IMR-90 (cell line): ENCODE measurements at regions of chr7 and their contacts with region 1.

Region 1: DNA sequence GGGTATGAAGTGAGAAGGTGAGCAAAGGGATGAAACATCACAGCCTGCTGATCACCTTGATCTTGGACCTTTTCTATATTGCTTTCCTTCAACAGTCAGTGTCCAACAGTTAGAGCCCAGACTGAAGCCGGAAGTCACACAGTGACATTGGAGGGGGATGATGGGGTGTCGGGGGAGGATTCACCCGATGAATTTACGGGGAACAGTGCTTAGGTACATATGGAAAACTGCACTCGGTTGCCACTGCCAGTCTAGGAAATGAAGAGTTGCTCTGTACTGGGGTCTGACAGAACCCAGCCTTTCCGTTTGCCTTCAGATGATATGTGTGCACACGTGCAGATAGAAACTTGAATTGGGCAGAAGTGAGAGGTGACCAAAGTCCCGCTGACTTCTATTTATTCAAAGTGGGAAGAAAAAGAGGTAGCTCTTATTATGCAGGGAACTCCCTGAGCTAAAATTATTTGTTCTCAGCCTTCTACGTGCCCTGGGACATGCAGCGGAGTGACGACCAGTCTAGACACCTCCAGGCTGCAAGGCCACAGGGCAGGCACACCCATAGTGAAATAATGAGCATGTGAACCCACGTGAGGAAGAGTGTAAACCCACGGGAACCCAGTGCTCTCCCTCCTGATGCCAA is 107.2 kb upstream of the INHBA start:
- DNase-seq: no peak
- ATAC-seq: no peak
- H3K4me3 ChIP-seq: no peak overlapping the region
- H3K27ac ChIP-seq: no peak overlapping the region
- H3K4me1 ChIP-seq: no peaks in the 10 kb centered on the region
- H3K27me3 ChIP-seq: no peaks in the 10 kb centered on the region
- CTCF ChIP-seq: no peak
- POLR2A ChIP-seq: no peak
- RAD21 ChIP-seq: no peak

Region 2: GRCh38 chr7:41824284-41824683 is 14.2 kb after region 1 on chr7:
- CTCF ChIA-PET with region 1: no interaction called
- POLR2A ChIA-PET with region 1: no interaction called
- dilution Hi-C with region 1: no loop called
- in situ Hi-C with region 1: no loop called
- intact Hi-C with region 1: no loop called
- DNase-seq: peak; percentile 71
- ATAC-seq: no peak; the same call in 1 of the 2 replicates
- H3K4me3 ChIP-seq: no peak overlapping the region
- H3K27ac ChIP-seq: no peak overlapping the region
- H3K4me1 ChIP-seq: peaks cover 13% of the 10 kb centered on the region
- H3K27me3 ChIP-seq: no peaks in the 10 kb centered on the region
- CTCF ChIP-seq: no peak
- POLR2A ChIP-seq: no peak
- RAD21 ChIP-seq: no peak

Region 3: DNA sequence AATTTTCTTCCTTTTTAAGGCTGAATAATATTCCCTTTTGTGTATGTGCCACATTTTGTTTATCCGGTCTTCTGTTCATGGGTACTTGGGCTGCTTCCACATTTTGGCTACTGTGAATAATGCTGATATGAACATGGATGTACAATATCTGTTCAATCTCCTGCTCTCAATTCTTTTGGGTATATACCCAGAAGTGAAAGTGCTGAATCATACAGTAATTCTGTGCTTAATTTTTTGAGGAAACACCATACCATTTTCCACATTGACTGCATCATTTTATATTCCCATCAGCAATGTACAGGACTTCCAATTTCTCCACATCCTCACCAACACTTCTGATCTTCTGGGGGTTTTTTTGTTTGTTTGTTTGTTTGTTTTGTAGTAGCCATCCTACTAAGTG is 27.9 kb after region 1 on chr7:
- CTCF ChIA-PET with region 1: no interaction called
- POLR2A ChIA-PET with region 1: interaction called, 10 read pairs
- dilution Hi-C with region 1: no loop called
- in situ Hi-C with region 1: no loop called
- intact Hi-C with region 1: no loop called
- DNase-seq: no peak
- ATAC-seq: no peak
- H3K4me3 ChIP-seq: no peak overlapping the region
- H3K27ac ChIP-seq: no peak overlapping the region
- H3K4me1 ChIP-seq: peaks cover 4% of the 10 kb centered on the region; the same call in 1 of the 2 replicates
- H3K27me3 ChIP-seq: no peaks in the 10 kb centered on the region
- CTCF ChIP-seq: no peak
- POLR2A ChIP-seq: no peak
- RAD21 ChIP-seq: no peak

Region 4: DNA sequence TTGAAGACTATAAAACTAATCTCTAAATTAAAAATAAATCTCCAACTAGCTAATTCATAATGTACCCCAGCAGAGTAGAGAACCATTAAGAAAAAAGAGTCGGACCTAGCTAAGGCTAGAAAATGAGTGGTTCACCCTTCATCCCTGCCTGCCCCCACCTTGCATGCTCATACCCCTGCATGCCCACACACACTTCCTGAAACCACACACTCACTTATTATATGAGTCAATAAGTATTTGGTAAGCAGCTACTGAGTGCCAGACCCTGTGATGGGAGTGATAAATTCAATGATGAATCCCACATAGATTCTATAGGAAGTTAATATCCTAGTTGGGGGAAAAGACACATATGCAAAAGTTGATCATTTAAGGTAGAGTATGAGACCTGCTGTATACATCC is 45.7 kb after region 1 on chr7:
- CTCF ChIA-PET with region 1: no interaction called
- POLR2A ChIA-PET with region 1: no interaction called
- dilution Hi-C with region 1: no loop called
- in situ Hi-C with region 1: no loop called
- intact Hi-C with region 1: no loop called
- DNase-seq: peak; percentile 43
- ATAC-seq: no peak
- H3K4me3 ChIP-seq: no peak overlapping the region
- H3K27ac ChIP-seq: no peak overlapping the region
- H3K4me1 ChIP-seq: peaks cover 4% of the 10 kb centered on the region; the same call in 1 of the 2 replicates
- H3K27me3 ChIP-seq: no peaks in the 10 kb centered on the region
- CTCF ChIP-seq: no peak
- POLR2A ChIP-seq: no peak
- RAD21 ChIP-seq: no peak